Cardiac septum (tissue), 1 donor: ENCODE measurements at regions of chr15 and their contacts with region 1.

Region 1: GRCh38 chr15:77507911-77508310 is 87.2 kb downstream of the HMG20A start:
- DNase-seq: no peak

Region 2: GRCh38 chr15:76196269-76197231 is 1311.4 kb before region 1 on chr15:
- intact Hi-C with region 1: no loop called
- DNase-seq: peak; percentile 70

Region 3: GRCh38 chr15:77243135-77243534 is 264.8 kb before region 1 on chr15:
- intact Hi-C with region 1: no loop called
- DNase-seq: no peak

Region 4: DNA sequence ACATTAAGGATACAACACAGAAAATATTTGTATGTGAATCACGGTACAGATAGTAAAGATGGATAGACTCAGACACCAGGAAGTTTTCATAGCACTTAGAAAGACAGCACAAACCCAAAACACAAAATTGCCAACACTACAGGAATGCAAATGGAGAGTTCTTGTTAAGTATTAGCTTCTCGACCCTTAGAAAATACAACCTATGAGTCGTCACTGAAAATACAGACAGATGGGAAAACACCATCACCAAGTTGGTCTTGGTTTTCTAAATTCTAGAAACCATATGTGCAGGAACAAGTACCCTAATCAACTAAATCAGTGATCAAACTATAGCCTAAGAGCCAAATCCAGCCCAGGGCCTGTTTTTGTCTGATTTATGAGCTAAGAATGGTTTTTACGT is 138.7 kb before region 1 on chr15:
- intact Hi-C with region 1: no loop called
- DNase-seq: no peak

Region 5: GRCh38 chr15:77526791-77527778 is 19.2 kb after region 1 on chr15:
- intact Hi-C with region 1: loop called (anchors 1 kb)
- DNase-seq: peak; percentile 74

Region 6: GRCh38 chr15:77650265-77650664 is 142.4 kb after region 1 on chr15:
- intact Hi-C with region 1: no loop called
- DNase-seq: no peak